Cardiac septum (tissue), 1 donor: ENCODE measurements at regions of chr5 and their contacts with region 1.

Region 1: DNA sequence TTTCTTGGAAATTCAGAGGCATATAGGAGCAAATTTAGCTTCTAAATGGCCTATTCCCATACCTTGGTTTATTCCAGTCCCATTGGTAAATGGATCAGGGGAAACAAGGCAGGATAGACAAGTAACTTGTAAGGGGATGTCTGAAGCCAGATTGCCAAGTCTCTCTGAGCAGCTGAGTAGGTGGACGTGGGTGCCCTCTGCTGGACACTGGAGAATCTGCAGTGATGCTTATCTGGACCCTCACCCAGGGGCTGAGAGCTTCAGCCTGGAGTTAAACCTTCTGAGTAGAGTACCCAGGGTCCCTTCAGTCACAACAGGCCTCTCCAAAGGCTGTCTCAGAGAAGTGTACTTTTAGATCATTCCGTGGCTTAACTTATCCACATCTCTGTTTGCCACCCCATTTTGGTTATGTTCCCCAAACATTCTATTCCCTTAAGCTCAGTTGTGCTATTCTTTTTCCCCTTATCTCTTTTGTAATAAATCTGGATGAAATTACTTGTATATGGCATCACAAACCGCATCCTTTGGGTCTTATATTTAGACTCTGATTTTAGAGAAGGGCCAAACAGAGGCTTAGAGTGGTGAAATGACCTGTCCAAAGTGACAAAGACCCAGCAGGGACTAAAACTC is 218.3 kb upstream of the GLRA1 start:
- DNase-seq: no peak

Region 2: DNA sequence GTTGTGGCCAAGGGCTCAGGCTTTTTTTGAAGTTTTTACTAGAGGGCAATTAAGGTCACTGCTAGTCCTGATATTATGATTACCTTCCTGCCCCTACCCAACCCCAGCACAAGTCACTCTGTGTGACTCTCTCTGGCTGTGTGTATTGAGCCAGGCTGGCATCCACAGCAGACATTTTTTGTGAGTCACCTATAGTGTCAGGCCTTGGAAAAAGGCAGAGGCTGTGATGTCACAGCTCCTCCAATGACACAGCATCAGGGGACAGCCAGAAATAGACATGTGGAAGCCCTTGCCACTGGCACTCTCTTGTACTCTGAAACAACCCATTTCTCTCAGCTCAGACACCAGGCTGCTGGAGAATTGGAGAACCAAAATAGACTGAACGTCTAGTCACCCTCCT is 116.7 kb after region 1 on chr5:
- intact Hi-C with region 1: no loop called
- DNase-seq: no peak

Region 3: GRCh38 chr5:152271420-152271819 is 128.5 kb after region 1 on chr5:
- intact Hi-C with region 1: loop called (anchors 5 kb)
- DNase-seq: no peak

Region 4: GRCh38 chr5:153187503-153187902 is 1044.5 kb after region 1 on chr5:
- intact Hi-C with region 1: no loop called
- DNase-seq: no peak